Activated B cell treated with CpG ODN at 0.5 μM for 24 hours (primary cell): ENCODE measurements at regions of chr9 and their contacts with region 1.

Region 1: DNA sequence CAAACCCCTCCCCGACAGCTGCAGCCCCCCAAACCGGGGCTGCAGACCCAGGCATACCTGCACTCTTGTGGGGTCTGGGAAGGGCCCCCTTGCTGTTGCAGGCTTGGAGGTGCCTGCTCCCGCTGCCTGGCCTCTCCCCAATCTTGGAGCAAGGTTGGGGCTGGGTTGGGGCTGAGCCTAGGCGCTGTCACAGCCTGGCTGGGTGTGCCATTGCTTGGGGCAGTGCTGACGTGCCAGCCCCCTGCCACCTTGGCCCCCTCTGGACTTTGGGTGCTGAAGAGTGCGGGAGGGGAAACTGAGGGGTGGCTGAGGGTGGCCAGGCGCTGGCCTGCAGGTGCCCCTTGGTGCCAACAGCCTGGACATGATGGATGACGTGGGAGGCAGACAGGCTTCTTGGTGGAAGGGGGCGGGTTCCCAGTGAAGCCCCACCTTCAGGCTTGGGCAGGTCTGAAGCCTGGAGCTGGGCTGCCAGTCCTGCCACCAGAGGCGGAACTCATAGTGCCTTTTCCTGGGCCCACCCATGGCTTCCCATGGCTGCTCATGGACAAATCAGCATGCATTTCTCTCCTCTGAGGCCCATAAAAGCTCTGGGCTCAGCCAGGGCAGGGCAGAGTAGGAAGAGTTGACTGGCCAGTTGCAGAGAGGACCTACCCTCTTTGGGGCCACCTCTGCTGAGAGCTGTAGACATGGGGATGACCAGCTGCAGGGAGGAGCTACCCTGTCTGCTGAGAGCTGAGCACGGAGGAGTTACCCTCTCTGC is 19.1 kb downstream of the TMEM38B start:
- DNase-seq: no peak
- ATAC-seq: no peak
- H3K4me3 Mint-ChIP-seq: no peak overlapping the region
- H3K27ac Mint-ChIP-seq: no peak overlapping the region
- H3K4me1 Mint-ChIP-seq: peaks cover 2% of the 10 kb centered on the region
- H3K27me3 Mint-ChIP-seq: no peaks in the 10 kb centered on the region
- CTCF ChIP-seq: no peak

Region 2: GRCh38 chr9:104795082-104795481 is 918.4 kb before region 1 on chr9:
- CTCF ChIA-PET with region 1: no interaction called
- POLR2A ChIA-PET with region 1: no interaction called
- intact Hi-C with region 1: no loop called
- DNase-seq: no peak
- ATAC-seq: no peak
- H3K4me3 Mint-ChIP-seq: no peak overlapping the region
- H3K27ac Mint-ChIP-seq: no peak overlapping the region
- H3K4me1 Mint-ChIP-seq: no peaks in the 10 kb centered on the region
- H3K27me3 Mint-ChIP-seq: no peaks in the 10 kb centered on the region
- CTCF ChIP-seq: no peak

Region 3: GRCh38 chr9:105425841-105426436 is 287.5 kb before region 1 on chr9:
- CTCF ChIA-PET with region 1: interaction called, 4 read pairs
- POLR2A ChIA-PET with region 1: no interaction called
- intact Hi-C with region 1: loop called (anchors 1 kb)
- DNase-seq: no peak
- ATAC-seq: no peak
- H3K4me3 Mint-ChIP-seq: no peak overlapping the region
- H3K27ac Mint-ChIP-seq: no peak overlapping the region
- H3K4me1 Mint-ChIP-seq: no peaks in the 10 kb centered on the region
- H3K27me3 Mint-ChIP-seq: no peaks in the 10 kb centered on the region
- CTCF ChIP-seq: no peak

Region 4: DNA sequence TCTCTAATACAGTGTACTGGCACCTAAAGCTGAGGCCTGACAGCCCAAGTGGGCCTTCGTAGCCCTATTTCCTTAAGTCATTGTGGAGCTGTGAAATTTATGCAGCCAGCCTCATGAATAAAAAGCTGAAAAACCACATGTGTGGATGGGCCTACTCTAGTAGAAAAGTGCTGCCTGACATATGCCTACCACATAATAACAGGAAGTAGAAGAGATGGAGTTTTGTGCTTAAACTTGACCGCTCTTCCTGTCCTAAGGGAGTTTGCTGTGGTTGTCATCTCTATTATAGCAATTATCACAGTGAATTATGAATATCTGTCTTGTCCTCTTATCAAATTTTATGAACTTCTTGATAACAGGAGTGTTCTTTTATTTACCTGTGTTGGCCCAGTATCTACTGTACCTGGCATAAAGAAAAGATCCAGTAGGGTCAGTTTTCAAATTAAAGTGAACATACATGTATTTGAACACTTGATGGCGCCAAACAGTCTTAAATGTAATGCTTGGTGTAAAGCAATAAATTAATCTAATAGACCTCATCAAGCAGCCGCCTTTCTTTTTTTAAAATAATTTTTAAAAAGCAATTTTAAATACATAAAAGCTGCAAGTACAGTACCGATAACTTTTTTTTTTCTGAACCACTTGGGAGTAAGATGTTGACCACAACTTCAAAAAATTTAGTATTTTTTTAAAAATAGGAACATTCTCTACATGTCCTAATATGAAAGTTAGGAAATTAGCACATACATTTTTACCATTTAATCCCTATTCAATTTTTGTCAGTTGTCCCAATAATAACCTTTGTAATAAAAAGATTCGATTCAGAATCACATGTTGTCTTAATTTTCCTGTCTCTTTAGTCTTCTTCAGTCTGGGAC is 104.5 kb before region 1 on chr9:
- CTCF ChIA-PET with region 1: interaction called, 30 read pairs
- POLR2A ChIA-PET with region 1: no interaction called
- intact Hi-C with region 1: loop called (anchors 1 kb)
- DNase-seq: no peak
- ATAC-seq: peak; percentile 67
- H3K4me3 Mint-ChIP-seq: no peak overlapping the region
- H3K27ac Mint-ChIP-seq: no peak overlapping the region
- H3K4me1 Mint-ChIP-seq: no peaks in the 10 kb centered on the region
- H3K27me3 Mint-ChIP-seq: no peaks in the 10 kb centered on the region
- CTCF ChIP-seq: peak; percentile 77

Region 5: GRCh38 chr9:105637787-105638395 is 75.5 kb before region 1 on chr9:
- CTCF ChIA-PET with region 1: interaction called, 30 read pairs
- POLR2A ChIA-PET with region 1: interaction called, 8 read pairs
- intact Hi-C with region 1: loop called (anchors 1 kb)
- DNase-seq: no peak
- ATAC-seq: no peak
- H3K4me3 Mint-ChIP-seq: no peak overlapping the region
- H3K27ac Mint-ChIP-seq: no peak overlapping the region
- H3K4me1 Mint-ChIP-seq: no peaks in the 10 kb centered on the region
- H3K27me3 Mint-ChIP-seq: no peaks in the 10 kb centered on the region
- CTCF ChIP-seq: no peak

Region 6: DNA sequence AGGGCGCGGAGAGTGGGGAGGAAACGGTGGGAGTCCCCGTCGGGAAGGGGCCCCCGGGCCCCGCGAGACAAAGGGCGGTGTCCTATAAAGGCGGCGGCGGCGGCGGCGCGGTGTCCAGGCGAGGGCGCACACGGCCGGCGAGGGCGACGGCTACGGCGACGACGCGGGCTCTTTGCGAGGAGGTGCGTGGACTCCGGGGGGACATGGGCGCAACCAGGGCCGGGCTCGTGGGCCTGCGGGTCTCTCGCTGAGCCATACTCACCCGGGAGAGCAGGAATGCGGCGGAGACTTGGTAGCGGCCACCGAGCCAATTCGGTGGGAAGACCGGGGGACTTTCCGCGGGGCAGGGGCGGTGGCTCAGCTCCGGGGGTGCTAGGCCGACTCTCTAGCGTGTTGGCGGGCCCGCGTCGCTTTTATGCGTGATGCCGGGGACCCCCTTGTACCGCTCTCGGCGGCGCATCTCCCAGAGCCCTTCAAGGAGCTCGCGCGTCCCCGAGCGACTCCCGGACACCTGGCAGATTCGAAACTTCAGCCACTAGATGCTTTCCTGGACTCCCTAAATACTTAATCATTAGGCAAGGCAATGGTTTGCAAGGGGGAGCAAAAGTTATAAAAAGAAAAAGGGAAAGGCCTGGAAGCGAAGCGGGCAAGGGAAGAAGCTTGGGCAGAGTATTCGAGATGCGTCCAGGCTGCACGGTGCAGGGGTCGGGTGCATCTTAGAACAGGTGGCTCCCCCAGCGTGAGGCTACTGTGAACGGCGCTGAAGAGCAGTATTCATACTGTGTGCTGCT is 57.1 kb before region 1 on chr9:
- CTCF ChIA-PET with region 1: interaction called, 12 read pairs
- POLR2A ChIA-PET with region 1: no interaction called
- intact Hi-C with region 1: loop called (anchors 1 kb)
- DNase-seq: peak; percentile 31
- ATAC-seq: peak; percentile 72
- H3K4me3 Mint-ChIP-seq: peak overlapping the region; percentile 87
- H3K27ac Mint-ChIP-seq: no peak overlapping the region
- H3K4me1 Mint-ChIP-seq: peaks cover 18% of the 10 kb centered on the region
- H3K27me3 Mint-ChIP-seq: peaks cover 17% of the 10 kb centered on the region
- CTCF ChIP-seq: no peak